ENCODE measurements at regions of chr7 and their contacts with region 1.

Region 1: GRCh38 chr7:11212080-11212711 is 238.5 kb downstream of the PHF14 start:
- DNase-seq: peak; percentile 69
- H3K4me3 Mint-ChIP-seq: no peak overlapping the region
- H3K27ac Mint-ChIP-seq: no peak overlapping the region
- H3K4me1 Mint-ChIP-seq: peaks cover 2% of the 10 kb centered on the region
- H3K27me3 Mint-ChIP-seq: peaks cover 3% of the 10 kb centered on the region

Region 2: DNA sequence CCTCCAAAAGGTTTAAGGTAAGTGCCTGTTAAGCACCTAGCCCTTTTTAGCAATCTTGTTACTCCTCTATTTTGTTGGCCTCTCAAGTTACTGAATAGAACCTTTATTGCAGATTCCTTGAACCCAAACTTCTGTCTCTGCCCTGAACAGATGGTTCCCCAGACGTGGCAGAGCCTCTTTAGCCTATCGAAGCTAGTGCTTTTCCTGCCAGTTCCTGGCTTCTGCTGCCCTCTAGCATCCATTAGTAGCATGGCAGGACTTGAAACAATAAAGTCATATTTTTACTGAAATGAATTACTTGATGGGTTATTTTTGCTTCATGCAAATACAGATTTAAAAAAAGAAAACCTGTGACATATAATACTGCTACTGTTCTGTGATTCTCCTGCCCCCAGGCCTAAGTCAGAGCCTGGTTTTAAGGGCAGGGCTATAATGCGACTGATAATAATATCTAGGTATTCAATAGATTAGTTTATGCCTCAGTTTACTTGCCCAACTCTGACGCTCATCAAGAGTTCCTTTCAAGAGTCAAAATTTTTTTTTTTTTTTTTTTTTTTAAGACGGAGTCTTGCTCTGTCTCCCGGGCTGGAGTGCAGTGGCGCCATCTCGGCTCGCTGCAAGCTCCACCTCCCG is 322.8 kb before region 1 on chr7:
- CTCF ChIA-PET with region 1: interaction called, 5 read pairs
- intact Hi-C with region 1: loop called (anchors 5 kb)
- DNase-seq: peak; percentile 57
- H3K4me3 Mint-ChIP-seq: no peak overlapping the region
- H3K27ac Mint-ChIP-seq: no peak overlapping the region
- H3K4me1 Mint-ChIP-seq: peaks cover 10% of the 10 kb centered on the region
- H3K27me3 Mint-ChIP-seq: no peaks in the 10 kb centered on the region

Region 3: GRCh38 chr7:10973061-10973944 is 238.9 kb before region 1 on chr7 and contains the start of gene PHF14:
- CTCF ChIA-PET with region 1: no interaction called
- intact Hi-C with region 1: loop called (anchors 10 kb)
- DNase-seq: peak; percentile 97
- H3K4me3 Mint-ChIP-seq: peak within 1 kb of the TSS; percentile 90
- H3K27ac Mint-ChIP-seq: peak within 1 kb of the TSS; percentile 89
- H3K4me1 Mint-ChIP-seq: peaks cover 31% of the 10 kb centered on the region
- H3K27me3 Mint-ChIP-seq: peaks cover 8% of the 10 kb centered on the region
- total RNA-seq, gene PHF14: 26.0 to 28.1 TPM

Region 4: DNA sequence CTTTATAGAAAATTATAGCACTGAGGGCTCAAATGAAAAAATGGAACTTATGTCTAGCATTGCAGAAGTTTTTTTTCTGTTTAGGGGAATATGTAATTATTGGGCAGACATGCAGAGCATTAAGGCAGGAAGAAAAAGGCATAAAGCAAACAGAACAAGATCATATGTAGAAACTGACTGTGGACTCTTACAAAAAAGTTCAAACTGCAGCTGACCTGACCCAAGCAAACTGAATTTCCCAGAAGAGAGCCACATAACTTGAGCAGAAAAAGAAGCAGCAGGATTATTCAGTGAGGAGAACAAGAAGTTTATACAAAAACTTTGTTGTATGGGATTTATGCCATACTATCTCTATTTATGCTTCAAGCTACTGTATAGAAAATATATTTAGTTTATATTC is 12.3 kb after region 1 on chr7:
- CTCF ChIA-PET with region 1: interaction called, 15 read pairs
- intact Hi-C with region 1: no loop called
- DNase-seq: no peak
- H3K4me3 Mint-ChIP-seq: no peak overlapping the region
- H3K27ac Mint-ChIP-seq: no peak overlapping the region
- H3K4me1 Mint-ChIP-seq: no peaks in the 10 kb centered on the region
- H3K27me3 Mint-ChIP-seq: peaks cover 2% of the 10 kb centered on the region